B cell (primary cell): ENCODE measurements at regions of chr12 and their contacts with region 1.

Region 1: DNA sequence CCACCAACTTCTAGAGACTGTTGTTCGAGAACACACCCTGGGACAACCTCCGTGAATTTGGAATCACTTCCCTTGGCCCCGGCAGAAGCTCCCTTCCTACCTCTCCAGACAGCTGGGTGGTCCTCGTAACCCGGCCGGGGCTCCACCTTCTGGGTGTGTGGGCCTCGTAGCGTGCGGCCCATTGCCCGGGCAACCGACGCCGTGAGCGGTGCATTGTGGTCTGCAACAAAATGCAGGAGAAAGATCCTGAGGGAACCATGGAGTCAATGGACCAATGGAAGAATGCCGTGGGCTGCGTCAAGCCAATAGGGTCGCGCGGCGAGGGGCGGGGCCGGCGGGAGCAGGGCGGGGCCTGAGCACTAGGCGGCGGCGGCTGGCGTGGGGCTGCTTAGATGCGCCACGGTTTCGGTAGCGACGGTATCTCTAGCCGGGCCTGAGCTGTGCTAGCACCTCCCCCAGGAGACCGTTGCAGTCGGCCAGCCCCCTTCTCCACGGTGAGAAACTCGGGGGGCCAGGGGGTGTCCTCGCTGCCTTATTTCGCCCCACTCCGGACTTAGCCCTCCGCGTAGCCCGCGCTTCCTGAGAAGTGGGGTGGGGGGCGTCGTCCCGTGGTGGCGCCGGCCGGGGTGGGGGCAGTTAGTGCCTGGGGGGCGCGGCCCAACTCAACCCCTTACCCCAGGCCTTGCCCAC is at the start of gene DYNLL1:
- DNase-seq: peak; percentile 99
- ATAC-seq: peak; percentile 95
- H3K4me3 ChIP-seq: peak within 1 kb of the TSS; percentile 68 to 90 (median 83)
- H3K4me3 Mint-ChIP-seq: peak within 1 kb of the TSS; percentile 98
- H3K27ac ChIP-seq: peak within 1 kb of the TSS; percentile 45 to 78
- H3K27ac Mint-ChIP-seq: peak within 1 kb of the TSS; percentile 93
- H3K4me1 ChIP-seq: peaks cover 17% of the 10 kb centered on the region in 2 donors
- H3K4me1 Mint-ChIP-seq: peaks cover 28% of the 10 kb centered on the region
- H3K27me3 ChIP-seq: no peaks in the 10 kb centered on the region
- H3K27me3 Mint-ChIP-seq: no peaks in the 10 kb centered on the region
- CTCF ChIP-seq: no peak
- total RNA-seq, gene DYNLL1: 132 and 138 TPM in 2 replicates

Region 2: GRCh38 chr12:120356567-120357030 is 139.3 kb before region 1 on chr12:
- CTCF ChIA-PET with region 1: interaction called, 9 read pairs
- POLR2A ChIA-PET with region 1: no interaction called
- intact Hi-C with region 1: loop called (anchors 1 kb)
- DNase-seq: peak; percentile 78
- ATAC-seq: peak; percentile 73
- H3K4me3 ChIP-seq: no peak overlapping the region
- H3K4me3 Mint-ChIP-seq: no peak overlapping the region
- H3K27ac ChIP-seq: no peak overlapping the region
- H3K27ac Mint-ChIP-seq: no peak overlapping the region
- H3K4me1 ChIP-seq: peaks cover 0 to 6% of the 10 kb centered on the region in 2 donors
- H3K4me1 Mint-ChIP-seq: peaks cover under 1% of the 10 kb centered on the region
- H3K27me3 ChIP-seq: peaks cover 0 to 20% (median 8%) of the 10 kb centered on the region in 4 experiments
- H3K27me3 Mint-ChIP-seq: peaks cover 52% of the 10 kb centered on the region
- CTCF ChIP-seq: peak; percentile 84

Region 3: GRCh38 chr12:120445911-120446843 is 49.7 kb before region 1 on chr12 and contains the starts of genes GATC and TRIAP1:
- CTCF ChIA-PET with region 1: interaction called, 7 read pairs
- POLR2A ChIA-PET with region 1: no interaction called
- intact Hi-C with region 1: loop called (anchors 2 kb)
- DNase-seq: peak; percentile 92
- ATAC-seq: peak; percentile 96
- H3K4me3 ChIP-seq: peak within 1 kb of the TSS; percentile 80 to 98 (median 90)
- H3K4me3 Mint-ChIP-seq: peak within 1 kb of the TSS; percentile 96
- H3K27ac ChIP-seq: peak within 1 kb of the TSS; percentile 90 to 94
- H3K27ac Mint-ChIP-seq: peak within 1 kb of the TSS; percentile 96
- H3K4me1 ChIP-seq: peaks cover 16 to 24% of the 10 kb centered on the region in 2 donors
- H3K4me1 Mint-ChIP-seq: peaks cover 38% of the 10 kb centered on the region
- H3K27me3 ChIP-seq: no peaks in the 10 kb centered on the region
- H3K27me3 Mint-ChIP-seq: no peaks in the 10 kb centered on the region
- CTCF ChIP-seq: no peak
- total RNA-seq, gene GATC: 26.0 and 26.4 TPM in 2 replicates
- total RNA-seq, gene TRIAP1: 15.8 and 19.6 TPM in 2 replicates

Region 4: DNA sequence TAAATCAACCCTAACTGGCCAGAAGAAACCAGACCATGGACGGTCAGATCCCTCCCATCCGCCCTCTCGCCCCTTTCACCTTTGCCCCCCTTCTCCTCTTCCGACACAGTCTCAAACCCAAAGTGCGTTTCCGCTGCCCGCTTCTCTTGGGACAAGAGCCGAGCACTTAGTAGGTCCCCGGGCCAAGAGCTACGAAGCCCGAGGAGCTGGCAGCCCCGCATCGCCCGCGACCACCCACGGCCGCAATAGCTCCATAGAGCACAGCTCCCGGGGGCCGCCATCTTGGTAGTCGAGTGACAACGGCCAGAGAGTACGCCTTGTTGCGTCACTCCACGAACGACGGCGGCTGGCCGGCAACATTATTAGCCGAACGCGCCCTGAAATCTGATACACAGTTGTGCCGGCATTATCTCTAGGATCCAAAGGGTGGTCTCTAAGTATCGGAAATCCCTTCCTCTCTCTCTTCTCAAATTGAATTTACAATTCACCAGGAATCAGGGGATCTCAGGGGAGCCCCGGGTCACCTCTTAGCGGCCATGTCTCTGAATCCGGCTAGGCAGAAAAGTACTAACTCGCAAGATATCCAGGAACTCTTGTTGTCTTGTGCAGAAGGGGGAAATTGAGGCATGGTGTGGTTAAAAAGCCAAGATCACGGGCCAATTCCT is 33.1 kb after region 1 on chr12 and contains the start of gene COQ5:
- CTCF ChIA-PET with region 1: interaction called, 8 read pairs
- POLR2A ChIA-PET with region 1: no interaction called
- intact Hi-C with region 1: loop called (anchors 1 kb)
- DNase-seq: peak; percentile 89
- ATAC-seq: peak; percentile 99
- H3K4me3 ChIP-seq: peak within 1 kb of the TSS; percentile 69 to 93 (median 88)
- H3K4me3 Mint-ChIP-seq: peak within 1 kb of the TSS; percentile 100
- H3K27ac ChIP-seq: peak within 1 kb of the TSS; percentile 75 to 86
- H3K27ac Mint-ChIP-seq: peak within 1 kb of the TSS; percentile 99
- H3K4me1 ChIP-seq: peaks cover 8 to 17% of the 10 kb centered on the region in 2 donors
- H3K4me1 Mint-ChIP-seq: peaks cover 23% of the 10 kb centered on the region
- H3K27me3 ChIP-seq: no peaks in the 10 kb centered on the region
- H3K27me3 Mint-ChIP-seq: no peaks in the 10 kb centered on the region
- CTCF ChIP-seq: no peak
- total RNA-seq, gene COQ5: 22.1 and 25.4 TPM in 2 replicates

Region 5: DNA sequence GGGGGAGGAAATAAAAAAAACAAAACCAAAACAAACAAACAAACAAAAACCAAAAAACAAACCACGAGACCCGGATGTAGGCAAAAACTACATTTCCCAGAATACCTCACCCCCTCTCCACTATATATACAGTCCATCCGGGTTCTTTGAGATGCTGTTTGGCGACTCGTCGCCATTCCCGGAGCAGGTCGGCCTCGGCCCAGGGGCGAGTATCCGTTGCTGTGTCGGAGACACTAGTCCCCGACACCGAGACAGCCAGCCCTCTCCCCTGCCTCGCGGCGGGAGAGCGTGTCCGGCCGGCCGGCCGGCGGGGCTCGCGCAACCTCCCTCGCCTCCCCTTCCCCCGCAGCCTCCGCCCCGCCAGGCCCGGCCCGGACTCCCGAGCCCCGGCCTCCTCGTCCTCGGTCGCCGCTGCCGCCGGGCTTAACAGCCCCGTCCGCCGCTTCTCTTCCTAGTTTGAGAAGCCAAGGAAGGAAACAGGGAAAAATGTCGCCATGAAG is 38.4 kb after region 1 on chr12 and contains the start of gene RNF10:
- CTCF ChIA-PET with region 1: interaction called, 8 read pairs
- POLR2A ChIA-PET with region 1: interaction called, 3 read pairs
- intact Hi-C with region 1: loop called (anchors 1 kb)
- DNase-seq: peak; percentile 93
- ATAC-seq: peak; percentile 77
- H3K4me3 ChIP-seq: peak within 1 kb of the TSS; percentile 69 to 93 (median 80)
- H3K4me3 Mint-ChIP-seq: peak within 1 kb of the TSS; percentile 97
- H3K27ac ChIP-seq: peak within 1 kb of the TSS; percentile 64 to 94
- H3K27ac Mint-ChIP-seq: peak within 1 kb of the TSS; percentile 97
- H3K4me1 ChIP-seq: peaks cover 47 to 55% of the 10 kb centered on the region in 2 donors
- H3K4me1 Mint-ChIP-seq: peaks cover 57% of the 10 kb centered on the region
- H3K27me3 ChIP-seq: no peaks in the 10 kb centered on the region
- H3K27me3 Mint-ChIP-seq: no peaks in the 10 kb centered on the region
- CTCF ChIP-seq: no peak
- total RNA-seq, gene RNF10: 227 and 236 TPM in 2 replicates